ENCODE measurements at regions of chr1 and their contacts with region 1.

Region 1: GRCh38 chr1:42941640-42942330 is 16.9 kb downstream of the SLC2A1 start:
- DNase-seq: peak; percentile 77 to 96
- H3K4me3 ChIP-seq: peak overlapping the region in 1 of 2 donors; percentile 9
- H3K27ac ChIP-seq: peak overlapping the region; percentile 92 to 93
- H3K4me1 ChIP-seq: peaks cover 43 to 75% of the 10 kb centered on the region in 2 donors
- H3K27me3 ChIP-seq: no peaks in the 10 kb centered on the region
- CTCF ChIP-seq: no peak

Region 2: GRCh38 chr1:42462828-42463763 is 478.7 kb before region 1 on chr1 and contains the start of gene CCDC30:
- intact Hi-C with region 1: loop called (anchors 5 kb)
- DNase-seq: peak; percentile 94 to 98
- H3K4me3 ChIP-seq: peak within 1 kb of the TSS; percentile 77
- H3K27ac ChIP-seq: peak within 1 kb of the TSS in 1 of 2 donors; percentile 23
- H3K4me1 ChIP-seq: no peaks in the 10 kb centered on the region
- H3K27me3 ChIP-seq: no peaks in the 10 kb centered on the region
- CTCF ChIP-seq: no peak
- total RNA-seq, gene CCDC30: not detected

Region 3: GRCh38 chr1:42924082-42924850 is 17.5 kb before region 1 on chr1:
- intact Hi-C with region 1: loop called (anchors 1 kb)
- DNase-seq: peak; percentile 85 to 97
- H3K4me3 ChIP-seq: peak overlapping the region; percentile 81 to 89
- H3K27ac ChIP-seq: peak overlapping the region; percentile 97 to 98
- H3K4me1 ChIP-seq: peaks cover 3 to 9% of the 10 kb centered on the region in 2 donors
- H3K27me3 ChIP-seq: no peaks in the 10 kb centered on the region
- CTCF ChIP-seq: no peak

Region 4: DNA sequence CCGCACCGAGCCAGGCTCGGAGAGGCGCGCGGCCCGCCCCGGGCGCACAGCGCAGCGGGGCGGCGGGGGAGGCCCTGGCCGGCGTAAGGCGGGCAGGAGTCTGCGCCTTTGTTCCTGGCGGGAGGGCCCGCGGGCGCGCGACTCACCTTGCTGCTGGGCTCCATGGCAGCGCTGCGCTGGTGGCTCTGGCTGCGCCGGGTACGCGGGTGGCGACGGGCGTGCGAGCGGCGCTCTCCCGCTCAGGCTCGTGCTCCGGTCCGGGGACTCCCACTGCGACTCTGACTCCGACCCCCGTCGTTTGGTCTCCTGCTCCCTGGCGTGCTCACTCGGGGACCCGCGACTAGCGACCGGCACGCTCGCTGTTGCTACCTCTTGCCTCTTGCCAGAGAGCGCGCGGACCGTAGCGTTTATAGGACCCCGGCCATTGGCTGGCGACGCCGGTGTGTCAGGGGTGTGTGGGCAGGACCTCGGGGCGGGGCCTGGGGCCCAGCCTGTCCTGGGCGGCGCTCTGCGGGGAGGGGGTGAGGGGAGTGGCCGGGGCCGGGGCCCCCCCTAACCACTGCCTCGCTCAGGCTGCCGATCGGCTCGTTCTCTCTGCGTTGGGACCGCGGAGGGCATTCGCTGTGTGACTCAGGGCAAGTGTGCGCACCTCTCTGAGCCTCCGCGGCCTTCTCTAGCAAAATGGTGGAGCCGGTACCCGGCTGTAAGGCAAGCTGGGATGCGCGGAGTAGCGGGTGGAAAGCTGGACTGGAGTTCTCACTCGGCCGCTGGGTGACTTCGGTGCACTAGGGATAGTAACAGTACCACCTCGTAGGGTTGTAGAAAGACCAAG is 16.9 kb after region 1 on chr1 and contains the start of gene SLC2A1:
- intact Hi-C with region 1: loop called (anchors 1 kb)
- DNase-seq: peak; percentile 88 to 97
- H3K4me3 ChIP-seq: peak within 1 kb of the TSS; percentile 94 to 96
- H3K27ac ChIP-seq: peak within 1 kb of the TSS; percentile 93 to 97
- H3K4me1 ChIP-seq: peaks cover 13 to 34% of the 10 kb centered on the region in 2 donors
- H3K27me3 ChIP-seq: no peaks in the 10 kb centered on the region
- CTCF ChIP-seq: peak in 1 of 3 experiments; percentile 3
- total RNA-seq, gene SLC2A1: 15.5 TPM

Region 5: DNA sequence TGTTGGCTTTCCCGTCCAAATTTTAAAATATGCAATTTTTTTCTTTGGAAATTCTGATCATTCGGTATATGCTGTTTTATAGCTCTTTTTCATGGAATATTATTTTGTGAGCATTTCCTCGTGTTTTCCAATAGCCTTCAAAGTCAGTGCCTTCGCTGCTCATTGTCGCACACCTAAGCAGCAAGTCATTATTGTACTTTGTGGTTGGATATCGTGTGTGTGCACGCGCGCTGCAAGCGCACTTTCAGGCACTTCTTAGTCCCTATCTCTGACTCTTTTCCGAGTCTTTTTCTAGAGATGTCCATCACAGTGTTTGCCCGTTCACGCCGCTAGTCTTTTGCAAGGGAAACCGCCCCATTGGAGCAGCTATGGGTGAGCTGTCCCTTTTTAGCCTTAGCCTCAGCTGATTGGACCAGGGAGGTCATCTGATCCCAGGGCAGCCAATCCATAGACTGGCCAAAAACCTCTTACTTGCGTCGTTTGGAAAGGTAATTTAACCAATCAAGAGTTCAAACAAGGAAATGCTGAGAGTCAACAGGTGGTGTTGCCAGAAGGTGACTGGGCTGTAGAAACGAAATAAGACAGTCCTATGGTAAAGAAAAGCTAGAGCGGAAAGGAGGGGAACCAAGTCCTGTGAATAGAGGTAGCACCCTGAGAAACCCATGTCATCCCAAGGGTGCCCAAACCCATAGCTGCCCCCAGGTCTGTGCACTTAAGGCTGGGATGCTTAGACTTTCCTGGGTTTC is 512.7 kb after region 1 on chr1:
- intact Hi-C with region 1: loop called (anchors 10 kb)
- DNase-seq: peak in 1 of 2 donors; percentile 88
- H3K4me3 ChIP-seq: peak overlapping the region; percentile 66 to 77
- H3K27ac ChIP-seq: peak overlapping the region; percentile 88 to 94
- H3K4me1 ChIP-seq: peaks cover 0 to 5% of the 10 kb centered on the region in 2 donors
- H3K27me3 ChIP-seq: no peaks in the 10 kb centered on the region
- CTCF ChIP-seq: no peak

Region 6: DNA sequence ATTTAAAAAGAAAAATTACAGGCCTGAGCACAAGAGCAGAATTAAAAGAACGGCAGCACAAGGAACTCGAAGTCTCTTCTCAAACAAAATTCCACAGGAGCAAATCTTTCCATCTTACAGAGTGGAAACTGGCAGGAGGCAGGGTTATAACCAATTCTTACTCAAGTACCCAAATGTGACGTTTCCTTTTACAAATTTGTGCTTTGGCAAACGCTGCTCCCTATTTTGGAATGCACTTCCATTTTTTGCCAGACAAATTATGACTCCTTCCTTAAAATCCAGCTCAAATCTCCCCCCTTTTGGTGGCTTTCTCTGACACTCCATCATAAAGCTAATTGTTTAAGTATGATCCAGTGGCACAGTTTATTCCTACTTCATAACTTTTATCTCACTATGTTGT is 1405.5 kb after region 1 on chr1:
- intact Hi-C with region 1: loop called (anchors 5 kb)
- DNase-seq: peak in 1 of 2 donors; percentile 73
- H3K4me3 ChIP-seq: no peak overlapping the region
- H3K27ac ChIP-seq: peak overlapping the region; percentile 84
- H3K4me1 ChIP-seq: peaks cover 9 to 25% of the 10 kb centered on the region in 2 donors
- H3K27me3 ChIP-seq: no peaks in the 10 kb centered on the region
- CTCF ChIP-seq: peak in 1 of 3 experiments; percentile 12